Heart left ventricle (tissue), 16 donors: ENCODE measurements at regions of chr10 and their contacts with region 1.

Region 1: GRCh38 chr10:7345717-7346116 is 65.1 kb downstream of the SFMBT2 start:
- DNase-seq: peak in 4 of 5 donors; percentile 40 to 59 (median 52)
- ATAC-seq: peak; percentile 88 to 92 (median 90)
- H3K4me3 ChIP-seq: peak overlapping the region in 1 of 12 donors; percentile 18
- H3K27ac ChIP-seq: peak overlapping the region; percentile 23 to 86 (median 56)
- H3K4me1 ChIP-seq: peaks cover 0 to 26% (median 18%) of the 10 kb centered on the region in 12 donors
- H3K27me3 ChIP-seq: no peaks in the 10 kb centered on the region
- CTCF ChIP-seq: no peak
- POLR2A ChIP-seq: no peak

Region 2: DNA sequence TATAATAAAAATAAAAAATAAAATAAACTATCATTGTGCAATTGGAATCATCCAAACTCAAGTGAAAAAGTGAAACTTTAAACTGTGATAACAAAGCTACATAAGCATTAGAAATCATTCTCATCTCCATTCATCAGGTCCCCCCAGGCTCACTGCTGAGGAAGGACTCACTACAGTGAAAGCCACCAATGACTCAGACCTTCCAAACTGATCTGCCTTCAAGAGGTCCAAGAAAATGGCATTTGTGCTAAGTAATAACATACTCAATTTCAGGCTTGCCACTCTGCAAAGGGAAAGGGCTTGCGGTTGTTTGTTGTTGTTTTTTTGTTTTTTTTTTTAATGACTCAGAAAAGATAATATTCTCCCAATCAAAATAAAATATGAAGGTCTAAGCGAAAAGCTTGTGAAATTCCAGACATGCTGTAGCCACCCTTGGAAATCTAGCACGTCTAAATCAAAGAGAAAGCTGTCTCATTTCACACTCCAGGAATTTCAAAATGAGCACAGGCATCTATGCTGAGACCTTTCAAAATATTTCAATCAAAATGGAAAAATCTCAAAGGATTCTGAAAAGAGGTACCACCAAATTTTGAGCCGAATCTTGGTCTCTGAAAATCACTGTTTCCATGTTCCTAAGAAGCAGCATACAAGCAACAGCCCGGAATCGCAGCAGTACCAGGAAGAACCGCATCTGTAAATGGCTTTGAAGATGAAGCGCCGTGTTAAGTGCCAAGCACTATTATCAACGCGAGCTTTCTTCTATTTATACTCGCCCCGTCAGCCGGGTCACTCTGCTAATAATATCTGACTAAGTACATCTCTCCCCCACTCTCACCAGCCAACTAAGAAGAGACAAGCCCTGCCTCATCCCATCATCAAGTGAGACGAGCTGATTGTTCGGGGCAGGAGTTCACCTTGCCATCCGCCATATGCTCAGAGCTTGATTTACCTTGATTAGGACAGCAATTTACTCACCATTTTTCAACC is 51.6 kb after region 1 on chr10:
- intact Hi-C with region 1: loop called in 3 of 10 experiments (anchors 5 to 10 kb)
- DNase-seq: peak in 4 of 5 donors; percentile 53 to 76 (median 70)
- ATAC-seq: peak; percentile 86 to 93 (median 91)
- H3K4me3 ChIP-seq: peak overlapping the region in 7 of 12 donors; percentile 8 to 33 (median 25)
- H3K27ac ChIP-seq: peak overlapping the region; percentile 7 to 86 (median 76)
- H3K4me1 ChIP-seq: peaks cover 0 to 53% (median 32%) of the 10 kb centered on the region in 12 donors
- H3K27me3 ChIP-seq: no peaks in the 10 kb centered on the region
- CTCF ChIP-seq: peak in 2 of 12 donors; percentile 17 to 24
- POLR2A ChIP-seq: no peak